ENCODE measurements at regions of chr11 and their contacts with region 1.

Region 1: GRCh38 chr11:447923-448731 is 2.0 kb upstream of the PTDSS2 start:
- DNase-seq: peak; percentile 93
- H3K4me3 ChIP-seq: peak overlapping the region; percentile 95
- H3K27ac ChIP-seq: peak overlapping the region; percentile 84
- H3K4me1 ChIP-seq: peaks cover 12% of the 10 kb centered on the region
- H3K27me3 ChIP-seq: no peaks in the 10 kb centered on the region
- CTCF ChIP-seq: peak; percentile 81

Region 2: DNA sequence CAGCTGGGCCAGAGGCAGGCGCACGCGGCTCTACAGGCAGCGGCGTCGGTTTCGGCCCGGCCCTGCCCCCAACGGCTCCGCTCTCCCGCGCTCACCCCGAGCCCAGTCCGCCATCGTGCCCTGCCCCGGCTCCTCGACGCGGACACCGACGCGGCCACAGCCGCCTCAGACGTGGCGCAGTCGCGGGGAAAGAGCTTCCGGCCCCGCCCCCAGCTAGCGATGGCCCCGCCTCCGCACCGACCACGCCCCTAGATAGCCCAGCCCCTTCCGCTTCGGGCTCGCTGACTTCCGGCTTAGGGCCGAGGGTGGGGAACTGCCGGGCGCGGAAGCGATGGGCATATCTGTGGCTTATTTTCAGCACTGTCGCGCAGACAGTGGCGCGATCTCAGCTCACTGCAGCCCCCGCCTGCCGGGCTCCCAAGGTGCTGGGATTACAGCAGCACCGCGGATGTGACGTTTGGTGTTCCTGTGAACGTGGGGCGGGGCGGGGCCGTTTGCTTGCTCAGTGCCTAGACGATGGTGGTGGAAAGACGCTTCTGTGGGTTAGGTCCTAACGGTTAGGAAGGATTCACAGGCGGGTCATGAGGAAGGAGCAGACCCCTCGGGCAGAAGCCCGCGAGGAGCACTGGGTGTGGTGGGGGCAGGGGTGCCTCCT is 240.8 kb before region 1 on chr11 and contains the starts of genes BET1L and RIC8A:
- CTCF ChIA-PET with region 1: no interaction called
- POLR2A ChIA-PET with region 1: no interaction called
- intact Hi-C with region 1: loop called (anchors 10 kb)
- DNase-seq: peak; percentile 98
- H3K4me3 ChIP-seq: peak within 1 kb of the TSS; percentile 69
- H3K27ac ChIP-seq: peak within 1 kb of the TSS; percentile 98
- H3K4me1 ChIP-seq: peaks cover 13% of the 10 kb centered on the region
- H3K27me3 ChIP-seq: no peaks in the 10 kb centered on the region
- CTCF ChIP-seq: no peak
- total RNA-seq, gene BET1L: 22.2 and 26.2 TPM in 2 replicates
- total RNA-seq, gene RIC8A: 78.2 and 88.2 TPM in 2 replicates

Measured in A673 (cell line).